ENCODE measurements at regions of chr1 and their contacts with region 1.

Region 1: GRCh38 chr1:166479052-166479631 is 312.3 kb upstream of the FAM78B start:
- DNase-seq: peak; percentile 71
- H3K4me3 Mint-ChIP-seq: no peak overlapping the region
- H3K27ac Mint-ChIP-seq: no peak overlapping the region
- H3K4me1 Mint-ChIP-seq: no peaks in the 10 kb centered on the region
- H3K27me3 Mint-ChIP-seq: peaks cover 29% of the 10 kb centered on the region
- CTCF ChIP-seq: peak; percentile 89

Region 2: DNA sequence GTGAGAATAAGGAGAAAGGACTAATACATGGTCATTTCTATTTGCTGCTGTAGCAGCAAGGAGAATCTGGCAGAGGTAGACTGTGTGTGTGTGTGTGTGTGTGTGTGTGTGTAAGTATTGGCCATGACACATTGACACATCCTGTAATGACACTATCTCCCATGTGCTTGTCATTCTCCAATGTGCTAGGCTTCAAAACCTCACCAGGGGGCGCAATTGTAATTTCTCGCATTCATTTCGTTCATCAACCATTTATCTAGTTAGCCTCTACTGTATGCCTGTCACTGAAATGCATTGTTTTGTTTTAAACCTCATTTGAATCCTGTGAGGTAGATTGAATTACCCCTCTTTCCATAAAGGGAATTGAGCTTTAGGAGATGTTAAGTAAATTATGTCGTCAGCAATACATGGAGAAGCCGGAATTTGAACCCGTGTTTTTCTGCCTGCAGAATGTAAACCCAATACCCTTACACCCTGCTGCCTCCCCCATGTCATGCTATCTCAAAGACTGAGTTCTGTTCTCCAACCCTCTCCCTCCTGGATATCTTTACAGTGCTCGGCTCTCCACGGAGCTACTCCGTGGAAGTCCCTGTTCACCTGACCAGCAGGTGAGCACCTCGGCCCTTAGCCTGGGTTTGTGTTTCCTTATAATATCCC is 550.9 kb before region 1 on chr1:
- CTCF ChIA-PET with region 1: interaction called, 103 read pairs
- POLR2A ChIA-PET with region 1: interaction called, 3 read pairs
- intact Hi-C with region 1: loop called (anchors 1 kb)
- DNase-seq: peak; percentile 82
- H3K4me3 Mint-ChIP-seq: no peak overlapping the region
- H3K27ac Mint-ChIP-seq: no peak overlapping the region
- H3K4me1 Mint-ChIP-seq: no peaks in the 10 kb centered on the region
- H3K27me3 Mint-ChIP-seq: no peaks in the 10 kb centered on the region
- CTCF ChIP-seq: peak; percentile 78

Region 3: DNA sequence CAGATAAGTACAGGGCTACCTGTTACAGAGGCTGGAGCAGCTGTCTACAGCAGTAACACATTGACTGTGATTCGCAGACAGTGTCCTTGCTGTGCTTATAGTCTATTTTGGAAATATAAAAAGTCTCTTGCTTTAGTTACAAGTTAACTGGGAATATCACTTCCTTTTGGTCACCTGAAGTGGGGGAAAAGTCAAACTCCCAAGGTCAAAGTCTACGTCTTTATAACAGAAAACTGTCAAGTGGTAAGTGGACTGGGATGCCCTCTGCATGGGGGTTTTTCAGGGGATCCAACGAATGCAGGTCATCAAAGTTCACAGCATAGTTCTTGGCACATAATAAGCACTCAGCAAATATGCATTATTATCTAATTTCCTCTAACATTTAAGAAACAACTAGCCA is 367.7 kb before region 1 on chr1:
- CTCF ChIA-PET with region 1: no interaction called
- POLR2A ChIA-PET with region 1: no interaction called
- intact Hi-C with region 1: no loop called
- DNase-seq: no peak
- H3K4me3 Mint-ChIP-seq: no peak overlapping the region
- H3K27ac Mint-ChIP-seq: no peak overlapping the region
- H3K4me1 Mint-ChIP-seq: no peaks in the 10 kb centered on the region
- H3K27me3 Mint-ChIP-seq: no peaks in the 10 kb centered on the region
- CTCF ChIP-seq: no peak

Region 4: GRCh38 chr1:166365081-166365480 is 114.1 kb before region 1 on chr1:
- CTCF ChIA-PET with region 1: no interaction called
- POLR2A ChIA-PET with region 1: no interaction called
- intact Hi-C with region 1: no loop called
- DNase-seq: no peak
- H3K4me3 Mint-ChIP-seq: no peak overlapping the region
- H3K27ac Mint-ChIP-seq: no peak overlapping the region
- H3K4me1 Mint-ChIP-seq: no peaks in the 10 kb centered on the region
- H3K27me3 Mint-ChIP-seq: no peaks in the 10 kb centered on the region
- CTCF ChIP-seq: no peak

Region 5: GRCh38 chr1:166457700-166458099 is 21.4 kb before region 1 on chr1:
- CTCF ChIA-PET with region 1: interaction called, 11 read pairs
- POLR2A ChIA-PET with region 1: no interaction called
- intact Hi-C with region 1: no loop called
- DNase-seq: no peak
- H3K4me3 Mint-ChIP-seq: no peak overlapping the region
- H3K27ac Mint-ChIP-seq: no peak overlapping the region
- H3K4me1 Mint-ChIP-seq: no peaks in the 10 kb centered on the region
- H3K27me3 Mint-ChIP-seq: no peaks in the 10 kb centered on the region
- CTCF ChIP-seq: no peak

Region 6: GRCh38 chr1:166511761-166512160 is 32.6 kb after region 1 on chr1:
- CTCF ChIA-PET with region 1: interaction called, 33 read pairs
- POLR2A ChIA-PET with region 1: no interaction called
- intact Hi-C with region 1: no loop called
- DNase-seq: peak; percentile 98
- H3K4me3 Mint-ChIP-seq: no peak overlapping the region
- H3K27ac Mint-ChIP-seq: no peak overlapping the region
- H3K4me1 Mint-ChIP-seq: no peaks in the 10 kb centered on the region
- H3K27me3 Mint-ChIP-seq: no peaks in the 10 kb centered on the region
- CTCF ChIP-seq: no peak

Region 7: GRCh38 chr1:166638137-166638536 is 159.0 kb after region 1 on chr1:
- CTCF ChIA-PET with region 1: no interaction called
- POLR2A ChIA-PET with region 1: no interaction called
- intact Hi-C with region 1: no loop called
- DNase-seq: no peak
- H3K4me3 Mint-ChIP-seq: no peak overlapping the region
- H3K27ac Mint-ChIP-seq: no peak overlapping the region
- H3K4me1 Mint-ChIP-seq: no peaks in the 10 kb centered on the region
- H3K27me3 Mint-ChIP-seq: peaks cover 22% of the 10 kb centered on the region
- CTCF ChIP-seq: no peak

Region 8: DNA sequence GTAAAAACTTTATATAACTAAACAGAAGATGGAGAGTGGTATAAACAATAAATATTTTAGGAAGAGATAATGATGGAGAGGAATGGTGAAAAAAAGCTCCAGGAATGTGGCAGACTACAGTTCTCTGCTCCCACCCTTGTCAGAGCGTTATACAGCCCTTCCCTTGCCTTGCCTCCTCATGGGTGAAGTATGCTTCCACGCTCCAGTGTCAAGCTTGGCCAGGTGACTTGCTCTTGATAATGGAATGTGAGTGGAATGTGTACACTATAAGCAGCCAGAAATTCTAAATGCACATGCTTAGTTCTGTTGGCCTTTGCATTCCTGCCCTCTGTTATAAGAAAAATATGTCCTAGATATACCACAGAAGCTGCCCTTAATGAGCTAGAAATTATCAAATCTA is 335.5 kb after region 1 on chr1:
- CTCF ChIA-PET with region 1: interaction called, 28 read pairs
- POLR2A ChIA-PET with region 1: no interaction called
- intact Hi-C with region 1: loop called (anchors 2 kb)
- DNase-seq: no peak
- H3K4me3 Mint-ChIP-seq: no peak overlapping the region
- H3K27ac Mint-ChIP-seq: no peak overlapping the region
- H3K4me1 Mint-ChIP-seq: no peaks in the 10 kb centered on the region
- H3K27me3 Mint-ChIP-seq: no peaks in the 10 kb centered on the region
- CTCF ChIP-seq: no peak

Measured in MCF 10A (cell line).